Activated CD4-positive, alpha-beta memory T cell treated with anti-CD3 and anti-CD28 coated beads for 36 hours (primary cell): ENCODE measurements at regions of chr4 and their contacts with region 1.

Region 1: DNA sequence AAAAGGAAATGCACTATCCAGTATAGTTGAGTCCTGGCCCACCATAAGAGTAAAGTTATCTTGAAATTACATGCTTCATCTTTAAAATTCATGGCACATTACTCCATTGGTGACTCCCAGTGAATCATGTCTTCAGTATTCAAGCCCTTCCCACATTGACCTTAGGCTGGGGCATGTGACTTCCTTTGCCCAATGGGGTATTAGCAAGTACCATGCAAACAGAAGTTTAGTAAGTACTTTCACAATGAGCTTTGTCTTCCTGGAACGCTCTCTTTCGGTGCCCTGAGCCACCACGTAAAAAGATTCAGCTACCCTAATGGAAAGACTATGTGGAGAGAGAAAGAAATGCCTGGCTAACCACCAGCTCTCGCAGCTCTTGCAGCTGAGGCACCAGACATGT is 235.4 kb downstream of the HNRNPD start:
- DNase-seq: peak; percentile 35
- H3K4me3 Mint-ChIP-seq: no peak overlapping the region
- H3K27ac Mint-ChIP-seq: peak overlapping the region; percentile 34
- H3K4me1 Mint-ChIP-seq: peaks cover 31% of the 10 kb centered on the region
- H3K27me3 Mint-ChIP-seq: no peaks in the 10 kb centered on the region

Region 2: GRCh38 chr4:82044142-82044993 is 94.0 kb before region 1 on chr4:
- CTCF ChIA-PET with region 1: no interaction called
- POLR2A ChIA-PET with region 1: no interaction called
- intact Hi-C with region 1: loop called (anchors 10 kb)
- DNase-seq: peak; percentile 19
- H3K4me3 Mint-ChIP-seq: no peak overlapping the region
- H3K27ac Mint-ChIP-seq: no peak overlapping the region
- H3K4me1 Mint-ChIP-seq: peaks cover 12% of the 10 kb centered on the region
- H3K27me3 Mint-ChIP-seq: peaks cover 42% of the 10 kb centered on the region

Region 3: DNA sequence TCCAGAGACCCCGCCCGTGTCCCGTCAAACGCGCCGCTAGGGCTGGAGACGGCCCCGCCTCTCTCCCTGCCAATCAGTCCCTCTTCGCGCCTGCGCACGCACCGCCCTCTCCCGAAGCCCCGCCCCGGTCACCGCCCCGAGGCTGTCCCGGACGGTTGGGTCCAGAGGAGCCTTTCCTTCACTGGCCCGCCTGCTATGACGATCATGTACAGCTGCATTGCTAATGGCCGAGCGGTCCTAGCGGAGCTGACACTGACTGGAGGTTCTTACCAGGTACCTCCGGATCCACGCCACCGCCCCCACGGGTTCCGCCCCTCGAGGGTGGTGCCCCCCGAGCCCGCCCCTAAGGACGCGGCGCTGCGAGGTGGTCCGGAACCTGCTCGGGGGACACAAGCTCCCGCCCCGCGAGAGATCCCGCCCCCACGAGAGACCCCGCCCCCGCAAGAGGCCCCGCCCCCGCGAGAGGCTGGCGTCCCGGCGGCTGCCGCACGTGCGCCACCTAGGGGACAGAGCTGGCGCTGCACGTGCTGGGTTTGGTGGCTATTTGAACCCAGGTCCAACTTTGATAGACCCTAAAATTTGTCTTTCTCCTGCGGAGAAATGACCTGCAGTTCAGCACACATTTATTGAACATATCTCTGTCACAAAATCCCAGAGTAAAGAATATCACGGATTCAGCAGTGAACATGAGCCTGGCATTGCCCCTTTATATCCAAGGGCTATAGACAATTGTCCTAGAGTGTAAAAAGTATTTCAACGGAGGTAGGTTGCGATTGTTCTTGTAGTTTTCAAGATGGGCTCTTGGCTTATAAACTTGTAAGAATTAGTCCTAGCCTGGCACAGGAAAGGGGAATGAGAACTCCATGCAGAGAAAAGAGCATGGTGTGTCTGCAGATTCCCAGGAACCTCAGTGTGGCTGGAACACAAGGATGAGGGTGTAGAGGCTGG is 146.8 kb after region 1 on chr4:
- CTCF ChIA-PET with region 1: no interaction called
- POLR2A ChIA-PET with region 1: no interaction called
- intact Hi-C with region 1: loop called (anchors 5 kb)
- DNase-seq: peak; percentile 100
- H3K4me3 Mint-ChIP-seq: peak overlapping the region; percentile 61
- H3K27ac Mint-ChIP-seq: peak overlapping the region; percentile 38
- H3K4me1 Mint-ChIP-seq: peaks cover 12% of the 10 kb centered on the region
- H3K27me3 Mint-ChIP-seq: peaks cover 3% of the 10 kb centered on the region